ENCODE measurements at regions of chr19 and their contacts with region 1.

Region 1: DNA sequence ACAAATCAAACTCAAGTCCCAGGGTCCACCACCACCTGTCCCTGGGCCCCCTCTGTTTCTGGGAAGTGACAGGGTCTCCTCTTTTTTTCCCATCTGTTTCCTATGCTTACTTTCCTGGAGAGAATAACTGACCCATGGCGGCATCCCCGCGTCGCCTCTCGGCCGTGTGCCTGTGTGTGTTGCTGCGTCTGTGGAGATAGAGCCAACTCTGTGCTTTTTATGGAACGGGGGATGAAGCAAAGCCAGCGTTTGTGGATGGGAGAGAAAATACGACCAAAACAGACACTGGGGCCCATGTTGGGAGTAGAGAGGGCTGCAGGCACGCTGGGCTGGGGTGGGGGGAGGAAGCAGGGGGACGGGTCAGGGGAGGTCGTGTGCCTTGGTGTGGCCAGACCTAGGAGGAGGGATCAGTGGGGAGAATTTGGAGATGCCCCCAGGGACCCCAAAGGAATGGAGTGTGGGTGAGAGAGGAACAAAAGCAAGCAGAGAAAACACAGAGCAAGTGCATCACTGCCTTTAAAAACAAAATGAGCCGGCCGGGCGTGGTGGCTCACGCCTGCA is 16.6 kb downstream of the PLK5 start:
- ATAC-seq: no peak
- H3K4me3 ChIP-seq: no peak overlapping the region
- H3K27ac ChIP-seq: no peak overlapping the region
- H3K4me1 ChIP-seq: no peaks in the 10 kb centered on the region

Region 2: GRCh38 chr19:1767464-1767933 is 227.1 kb after region 1 on chr19:
- in situ Hi-C with region 1: loop called in 1 of 9 experiments (anchors 25 kb)
- ATAC-seq: peak; percentile 29 to 86 (median 50)
- H3K4me3 ChIP-seq: peak overlapping the region in 1 of 5 donors; percentile 2
- H3K27ac ChIP-seq: no peak overlapping the region
- H3K4me1 ChIP-seq: peaks cover 3 to 30% of the 10 kb centered on the region in 2 donors

Region 3: DNA sequence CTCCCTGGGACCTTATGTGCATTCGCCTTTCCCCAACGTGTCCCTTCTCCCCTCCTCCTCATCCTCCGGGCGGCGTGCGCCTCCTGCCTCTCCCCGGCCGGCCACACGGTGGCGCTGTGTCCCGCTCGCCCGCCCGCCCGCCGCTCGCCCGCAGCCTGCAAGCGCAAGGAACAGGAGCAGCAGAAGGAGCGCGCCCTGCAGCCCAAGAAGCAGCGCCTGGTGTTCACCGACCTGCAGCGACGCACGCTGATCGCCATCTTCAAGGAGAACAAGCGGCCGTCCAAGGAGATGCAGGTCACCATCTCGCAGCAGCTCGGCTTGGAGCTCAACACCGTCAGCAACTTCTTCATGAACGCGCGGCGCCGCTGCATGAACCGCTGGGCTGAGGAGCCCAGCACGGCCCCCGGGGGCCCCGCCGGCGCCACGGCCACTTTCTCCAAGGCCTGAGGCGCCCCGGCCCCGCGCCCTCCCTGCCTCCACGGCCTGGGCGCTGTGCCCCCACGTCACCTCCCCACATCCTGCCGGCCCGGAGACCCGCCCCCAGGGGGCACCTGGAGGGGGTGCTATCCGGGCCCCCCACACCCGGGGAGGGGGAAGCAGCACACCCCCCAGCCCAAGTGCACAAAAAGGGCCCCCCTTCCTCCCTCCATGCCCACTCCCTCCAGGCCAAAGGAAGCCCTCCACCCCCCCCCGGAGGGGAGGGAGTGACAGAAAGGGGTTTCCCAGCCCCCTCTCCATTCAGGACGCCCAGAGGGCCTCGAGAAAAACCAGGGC is 234.7 kb after region 1 on chr19:
- in situ Hi-C with region 1: loop called in 2 of 9 experiments (anchors 25 kb)
- ATAC-seq: peak in 3 of 8 experiments; percentile 33 to 87 (median 64)
- H3K4me3 ChIP-seq: no peak overlapping the region
- H3K27ac ChIP-seq: no peak overlapping the region
- H3K4me1 ChIP-seq: peaks cover 0 to 9% of the 10 kb centered on the region in 2 donors

Region 4: GRCh38 chr19:1812469-1813196 is 272.2 kb after region 1 on chr19:
- in situ Hi-C with region 1: loop called in 1 of 9 experiments (anchors 25 kb)
- ATAC-seq: peak; percentile 87 to 90 (median 89)
- H3K4me3 ChIP-seq: peak overlapping the region; percentile 27 to 40 (median 29)
- H3K27ac ChIP-seq: peak overlapping the region in 1 of 2 donors; percentile 58
- H3K4me1 ChIP-seq: peaks cover 10 to 15% of the 10 kb centered on the region in 2 donors